H1 (cell line): ENCODE measurements at regions of chr17 and their contacts with region 1.

Region 1: GRCh38 chr17:48724251-48725003 is 1.4 kb downstream of the PRAC2 start:
- DNase-seq: peak in 1 of 2 experiments; percentile 88
- H3K4me3 ChIP-seq: no peak overlapping the region
- H3K27ac ChIP-seq: no peak overlapping the region
- H3K4me1 ChIP-seq: peaks cover 11 to 32% (median 15%) of the 10 kb centered on the region in 4 experiments; a peak in 6 of 7 replicates
- H3K27me3 ChIP-seq: peaks cover 98 to 100% (median 99%) of the 10 kb centered on the region in 4 experiments
- CTCF ChIP-seq: peak; percentile 60 to 70 (median 68)
- EP300 ChIP-seq: no peak
- POLR2A ChIP-seq: no peak
- RAD21 ChIP-seq: peak; percentile 73 to 74

Region 2: GRCh38 chr17:48671697-48672171 is 52.7 kb before region 1 on chr17:
- CTCF ChIA-PET with region 1: interaction called, 101 read pairs
- POLR2A ChIA-PET with region 1: no interaction called
- DNase-seq: peak; percentile 13 to 93
- H3K4me3 ChIP-seq: peak overlapping the region in 3 of 4 experiments; percentile 16 to 49 (median 32); a peak in 4 of 8 replicates
- H3K27ac ChIP-seq: no peak overlapping the region
- H3K4me1 ChIP-seq: no peaks in the 10 kb centered on the region; a peak in 1 of 7 replicates
- H3K27me3 ChIP-seq: peaks cover 0 to 9% (median 5%) of the 10 kb centered on the region in 4 experiments; a peak in 4 of 7 replicates
- CTCF ChIP-seq: peak; percentile 71 to 92 (median 84)
- EP300 ChIP-seq: no peak
- POLR2A ChIP-seq: no peak
- RAD21 ChIP-seq: peak; percentile 93 to 95

Region 3: GRCh38 chr17:48738803-48739526 is 14.5 kb after region 1 on chr17:
- CTCF ChIA-PET with region 1: interaction called, 145 read pairs
- POLR2A ChIA-PET with region 1: interaction called, 3 read pairs
- DNase-seq: peak in 1 of 2 experiments; percentile 65
- H3K4me3 ChIP-seq: no peak overlapping the region
- H3K27ac ChIP-seq: no peak overlapping the region
- H3K4me1 ChIP-seq: no peaks in the 10 kb centered on the region; a peak in 2 of 7 replicates
- H3K27me3 ChIP-seq: peaks cover 92 to 100% (median 100%) of the 10 kb centered on the region in 4 experiments
- CTCF ChIP-seq: no peak
- EP300 ChIP-seq: no peak
- POLR2A ChIP-seq: no peak
- RAD21 ChIP-seq: no peak

Region 4: GRCh38 chr17:48767263-48767774 is 42.9 kb after region 1 on chr17:
- CTCF ChIA-PET with region 1: interaction called, 25 read pairs
- POLR2A ChIA-PET with region 1: no interaction called
- DNase-seq: no peak
- H3K4me3 ChIP-seq: no peak overlapping the region
- H3K27ac ChIP-seq: no peak overlapping the region
- H3K4me1 ChIP-seq: no peaks in the 10 kb centered on the region
- H3K27me3 ChIP-seq: peaks cover under 1 to 4% (median 2%) of the 10 kb centered on the region in 4 experiments; a peak in 5 of 7 replicates
- CTCF ChIP-seq: peak in 1 of 3 experiments; percentile 12; a peak in 1 of 4 replicates
- EP300 ChIP-seq: no peak
- POLR2A ChIP-seq: no peak
- RAD21 ChIP-seq: no peak

Region 5: GRCh38 chr17:48816774-48817590 is 92.6 kb after region 1 on chr17 and contains the start of gene TTLL6:
- CTCF ChIA-PET with region 1: interaction called, 32 read pairs
- POLR2A ChIA-PET with region 1: no interaction called
- DNase-seq: peak; percentile 89 to 90
- H3K4me3 ChIP-seq: peak within 1 kb of the TSS; percentile 73 to 90 (median 83)
- H3K27ac ChIP-seq: peak within 1 kb of the TSS; percentile 76
- H3K4me1 ChIP-seq: peaks cover 15 to 18% (median 17%) of the 10 kb centered on the region in 4 experiments
- H3K27me3 ChIP-seq: no peaks in the 10 kb centered on the region
- CTCF ChIP-seq: no peak
- EP300 ChIP-seq: peak in 1 of 2 experiments; percentile 65; a peak in 1 of 3 replicates
- POLR2A ChIP-seq: peak in 1 of 2 experiments; percentile 87; a peak in 2 of 3 replicates
- RAD21 ChIP-seq: no peak
- total RNA-seq, gene TTLL6: 2.6 and 2.7 TPM in 2 replicates